Heart left ventricle (tissue), 16 donors: ENCODE measurements at regions of chr10 and their contacts with region 1.

Region 1: GRCh38 chr10:22086730-22087389 is 83.3 kb upstream of the DNAJC1 start:
- DNase-seq: peak; percentile 79 to 93 (median 85)
- ATAC-seq: peak; percentile 91 to 99 (median 99)
- H3K4me3 ChIP-seq: peak overlapping the region in 1 of 12 donors; percentile 11
- H3K27ac ChIP-seq: peak overlapping the region in 11 of 12 donors; percentile 8 to 73 (median 43)
- H3K4me1 ChIP-seq: peaks cover 0 to 14% (median 5%) of the 10 kb centered on the region in 12 donors
- H3K27me3 ChIP-seq: no peaks in the 10 kb centered on the region
- CTCF ChIP-seq: no peak
- POLR2A ChIP-seq: no peak

Region 2: DNA sequence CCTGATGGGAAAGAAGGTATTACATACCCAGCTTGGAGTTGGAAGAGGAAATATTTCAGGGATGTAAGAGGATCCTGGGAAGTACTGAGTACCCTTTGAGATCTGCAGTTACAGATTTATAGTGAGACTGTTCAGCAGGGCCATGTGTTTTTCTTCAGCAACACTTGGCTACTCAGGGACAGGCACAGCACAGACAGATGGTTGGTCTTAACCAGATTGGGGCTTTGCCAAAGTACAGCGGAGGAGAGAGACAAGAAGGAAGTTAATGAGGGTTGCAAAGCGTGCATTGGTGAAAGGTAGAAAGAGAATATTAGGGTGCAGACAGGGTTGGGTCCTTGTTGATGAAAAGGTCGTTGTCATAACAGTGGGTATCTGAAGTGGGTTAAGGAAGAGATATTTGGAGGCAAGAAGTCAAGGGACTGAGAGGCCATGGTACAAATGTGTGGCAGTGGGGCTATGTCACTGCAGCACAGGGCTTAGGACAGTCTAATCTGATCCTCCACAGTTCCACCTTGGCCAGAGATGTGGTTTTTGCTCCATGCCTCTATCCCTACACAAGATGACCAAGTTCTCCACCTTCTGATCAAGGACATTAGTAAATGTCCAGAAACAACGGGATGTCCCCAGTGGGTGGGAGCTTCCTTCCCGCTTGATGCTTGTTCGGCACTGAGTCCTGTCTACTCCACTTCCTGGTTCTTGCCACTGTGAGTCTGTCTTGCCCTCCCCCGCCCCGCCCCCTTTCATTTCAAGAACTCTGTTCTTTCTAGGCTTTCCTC is 64.4 kb before region 1 on chr10:
- intact Hi-C with region 1: loop called in 1 of 10 experiments (anchors 5 kb)
- DNase-seq: peak in 4 of 5 donors; percentile 61 to 77 (median 73)
- ATAC-seq: peak; percentile 92 to 98 (median 96)
- H3K4me3 ChIP-seq: peak overlapping the region in 7 of 12 donors; percentile 3 to 39 (median 17)
- H3K27ac ChIP-seq: peak overlapping the region in 4 of 12 donors; percentile 6 to 45 (median 32)
- H3K4me1 ChIP-seq: peaks cover 0 to 20% (median 10%) of the 10 kb centered on the region in 12 donors
- H3K27me3 ChIP-seq: no peaks in the 10 kb centered on the region
- CTCF ChIP-seq: no peak
- POLR2A ChIP-seq: no peak